ENCODE measurements at regions of chr11 and their contacts with region 1.

Region 1: GRCh38 chr11:6737872-6738466 is 33.8 kb downstream of the OR2AG2 start:
- DNase-seq: peak; percentile 23 to 82 (median 68)
- ATAC-seq: peak; percentile 54 to 65
- H3K4me3 Mint-ChIP-seq: peak overlapping the region in 9 of 10 donors; percentile 3 to 64 (median 30)
- H3K27ac Mint-ChIP-seq: peak overlapping the region; percentile 74 to 93 (median 86)
- H3K4me1 Mint-ChIP-seq: peaks cover 48 to 93% (median 84%) of the 10 kb centered on the region in 4 donors
- H3K27me3 Mint-ChIP-seq: no peaks in the 10 kb centered on the region

Region 2: DNA sequence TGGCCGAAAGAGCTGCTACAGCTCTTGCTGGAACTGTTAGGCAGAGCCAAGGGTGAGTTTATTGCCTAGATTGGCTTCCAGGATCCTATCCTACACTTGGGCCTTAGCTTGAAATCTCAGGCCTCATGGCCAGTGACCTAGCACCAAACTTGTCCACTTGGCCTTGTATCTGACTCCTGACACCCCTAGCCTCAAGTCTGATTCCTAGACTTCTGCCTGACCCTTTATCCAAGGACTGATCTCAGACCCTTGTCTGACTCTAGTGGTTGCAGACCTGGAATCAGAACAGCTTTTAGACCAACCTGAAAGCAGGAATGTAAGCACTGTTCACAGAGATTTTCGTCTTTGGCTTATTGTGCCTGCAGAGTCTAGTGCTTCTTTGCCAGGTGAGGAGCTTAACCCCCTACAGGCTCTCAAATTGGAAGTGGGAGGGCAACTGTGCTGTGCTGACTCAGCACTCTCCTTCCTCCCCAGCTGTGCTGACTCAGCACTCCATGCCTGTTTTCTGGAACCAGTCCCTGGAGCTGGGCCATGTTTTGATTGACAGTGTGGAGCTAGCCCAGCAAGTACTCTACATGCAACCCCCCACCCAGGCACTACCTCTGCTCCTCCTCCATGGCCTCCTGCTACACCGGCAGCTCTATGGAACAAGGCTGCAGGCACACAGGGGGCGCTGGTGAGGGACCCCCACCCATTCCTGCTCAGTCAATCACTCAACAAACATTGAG is 169.6 kb before region 1 on chr11:
- POLR2A ChIA-PET with region 1: no interaction called
- DNase-seq: peak in 1 of 10 donors; percentile 13
- ATAC-seq: no peak
- H3K4me3 Mint-ChIP-seq: no peak overlapping the region
- H3K27ac Mint-ChIP-seq: peak overlapping the region in 2 of 10 donors; percentile 9 to 67
- H3K4me1 Mint-ChIP-seq: peaks cover 0 to 10% (median 1%) of the 10 kb centered on the region in 4 donors
- H3K27me3 Mint-ChIP-seq: no peaks in the 10 kb centered on the region

Region 3: DNA sequence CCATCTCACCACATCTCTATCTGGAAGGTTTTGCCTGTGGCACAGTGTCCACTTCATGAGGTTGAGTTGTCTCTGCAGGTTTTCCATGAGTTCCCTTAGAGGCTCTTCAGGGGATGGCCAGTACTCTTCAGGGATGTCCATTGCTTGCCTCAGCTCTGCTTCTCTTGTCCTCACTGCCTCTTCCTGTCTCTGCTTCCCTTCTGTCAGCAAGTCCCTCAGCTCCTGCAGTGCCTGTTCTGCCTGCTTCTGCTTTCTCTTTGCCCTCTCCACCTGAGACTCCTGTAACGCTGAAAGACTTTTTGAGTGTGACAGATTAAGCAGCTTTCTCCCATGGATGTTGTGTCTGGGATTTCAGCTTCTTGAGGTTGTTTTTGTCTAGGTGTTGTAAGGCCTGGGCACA is 16.6 kb before region 1 on chr11:
- POLR2A ChIA-PET with region 1: interaction called, 15 read pairs
- DNase-seq: no peak
- ATAC-seq: no peak
- H3K4me3 Mint-ChIP-seq: peak overlapping the region in 9 of 10 donors; percentile 7 to 68 (median 54)
- H3K27ac Mint-ChIP-seq: peak overlapping the region; percentile 46 to 97 (median 83)
- H3K4me1 Mint-ChIP-seq: peaks cover 29 to 87% (median 75%) of the 10 kb centered on the region in 4 donors
- H3K27me3 Mint-ChIP-seq: no peaks in the 10 kb centered on the region

Region 4: DNA sequence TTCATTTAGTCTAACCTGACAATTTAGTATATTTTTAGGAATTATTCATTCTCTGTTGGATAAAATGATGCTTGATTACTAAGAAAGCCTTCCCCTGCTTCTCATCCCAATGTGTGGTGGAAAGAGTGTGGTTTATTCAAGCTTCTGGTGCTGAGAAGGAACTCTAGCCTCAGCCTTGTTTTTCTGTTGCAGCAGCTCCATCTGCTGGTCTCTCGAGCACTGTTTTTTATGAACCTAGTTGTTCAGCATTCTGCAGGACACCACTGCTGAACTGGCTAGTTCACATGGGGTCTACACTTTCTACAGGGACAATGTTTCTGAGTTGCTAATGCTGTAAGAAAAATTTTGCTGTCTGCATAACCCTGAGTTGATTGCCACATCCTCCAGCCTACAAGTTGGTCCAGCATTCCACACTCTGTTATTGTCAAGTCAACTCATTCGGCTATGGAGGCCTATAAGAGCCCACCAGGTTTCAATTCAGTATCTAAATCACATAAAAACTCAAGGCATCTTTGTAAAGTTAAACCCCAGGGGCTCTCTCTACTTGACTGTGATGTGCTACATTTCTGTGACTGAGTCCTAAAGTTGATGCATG is 19.5 kb after region 1 on chr11:
- POLR2A ChIA-PET with region 1: interaction called, 16 read pairs
- DNase-seq: peak; percentile 13 to 79 (median 55)
- ATAC-seq: peak; percentile 70 to 96
- H3K4me3 Mint-ChIP-seq: no peak overlapping the region
- H3K27ac Mint-ChIP-seq: peak overlapping the region in 2 of 10 donors; percentile 34 to 81
- H3K4me1 Mint-ChIP-seq: peaks cover 5 to 16% (median 7%) of the 10 kb centered on the region in 4 donors
- H3K27me3 Mint-ChIP-seq: peaks cover 0 to 5% (median 2%) of the 10 kb centered on the region in 5 donors

Measured in naive thymus-derived CD8-positive, alpha-beta T cell (primary cell).